Heart left ventricle (tissue), 16 donors: ENCODE measurements at regions of chr9 and their contacts with region 1.

Region 1: GRCh38 chr9:19108038-19108437 is 5.3 kb upstream of the HAUS6 start:
- DNase-seq: no peak
- ATAC-seq: no peak
- H3K4me3 ChIP-seq: no peak overlapping the region
- H3K27ac ChIP-seq: no peak overlapping the region
- H3K4me1 ChIP-seq: peaks cover 0 to 4% (median 0%) of the 10 kb centered on the region in 12 donors
- H3K27me3 ChIP-seq: no peaks in the 10 kb centered on the region
- CTCF ChIP-seq: no peak
- POLR2A ChIP-seq: no peak

Region 2: GRCh38 chr9:18721267-18721994 is 386.6 kb before region 1 on chr9:
- intact Hi-C with region 1: no loop called
- DNase-seq: no peak
- ATAC-seq: peak in 2 of 4 donors; percentile 81 to 82
- H3K4me3 ChIP-seq: no peak overlapping the region
- H3K27ac ChIP-seq: no peak overlapping the region
- H3K4me1 ChIP-seq: peaks cover 0 to 8% (median 0%) of the 10 kb centered on the region in 12 donors
- H3K27me3 ChIP-seq: no peaks in the 10 kb centered on the region
- CTCF ChIP-seq: no peak
- POLR2A ChIP-seq: no peak

Region 3: DNA sequence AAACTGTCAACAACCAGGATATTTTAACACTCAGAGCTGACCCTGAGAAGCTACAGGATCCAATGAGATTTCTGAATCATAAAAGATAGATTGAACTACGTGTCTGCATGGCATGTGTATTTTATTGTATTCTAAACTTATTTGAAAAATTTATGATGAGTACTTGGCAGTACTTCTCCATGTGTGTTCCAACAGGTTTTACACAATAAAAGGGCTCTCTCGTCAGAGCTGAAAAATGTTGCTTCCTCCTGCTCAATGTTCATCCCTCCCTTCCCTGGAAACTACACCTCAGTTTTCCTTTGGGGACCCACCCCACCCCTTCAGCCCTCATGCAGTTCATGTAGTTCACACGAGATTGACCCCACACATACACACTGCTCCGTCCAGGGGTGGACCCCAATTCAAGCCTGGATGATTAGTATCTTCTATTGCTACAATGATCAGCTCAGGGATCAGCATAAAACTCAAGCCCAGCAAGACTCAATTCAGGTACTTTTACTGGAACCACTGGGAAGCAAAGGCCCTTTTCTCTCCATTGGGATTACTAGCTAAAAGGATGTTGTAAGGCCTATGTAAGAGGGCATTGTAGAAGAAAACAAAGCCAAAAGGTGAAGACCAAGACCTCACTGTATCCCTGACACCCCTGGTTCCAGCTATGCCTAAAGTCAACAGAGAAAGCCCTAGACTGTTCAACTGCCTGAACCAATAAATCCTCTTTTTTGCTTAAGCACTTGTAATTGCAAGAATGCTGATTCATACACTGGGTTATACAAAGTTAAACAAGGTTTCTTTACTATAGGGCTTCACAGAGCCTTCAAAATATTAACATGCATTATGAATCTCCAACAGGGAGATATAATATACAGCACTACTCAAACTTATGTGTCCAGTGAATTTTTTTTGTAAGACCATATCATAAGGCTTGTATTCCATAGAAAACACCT is 187.6 kb before region 1 on chr9:
- intact Hi-C with region 1: no loop called
- DNase-seq: no peak
- ATAC-seq: no peak
- H3K4me3 ChIP-seq: no peak overlapping the region
- H3K27ac ChIP-seq: no peak overlapping the region
- H3K4me1 ChIP-seq: peaks cover 0 to 23% (median 4%) of the 10 kb centered on the region in 12 donors
- H3K27me3 ChIP-seq: no peaks in the 10 kb centered on the region
- CTCF ChIP-seq: no peak
- POLR2A ChIP-seq: no peak

Region 4: DNA sequence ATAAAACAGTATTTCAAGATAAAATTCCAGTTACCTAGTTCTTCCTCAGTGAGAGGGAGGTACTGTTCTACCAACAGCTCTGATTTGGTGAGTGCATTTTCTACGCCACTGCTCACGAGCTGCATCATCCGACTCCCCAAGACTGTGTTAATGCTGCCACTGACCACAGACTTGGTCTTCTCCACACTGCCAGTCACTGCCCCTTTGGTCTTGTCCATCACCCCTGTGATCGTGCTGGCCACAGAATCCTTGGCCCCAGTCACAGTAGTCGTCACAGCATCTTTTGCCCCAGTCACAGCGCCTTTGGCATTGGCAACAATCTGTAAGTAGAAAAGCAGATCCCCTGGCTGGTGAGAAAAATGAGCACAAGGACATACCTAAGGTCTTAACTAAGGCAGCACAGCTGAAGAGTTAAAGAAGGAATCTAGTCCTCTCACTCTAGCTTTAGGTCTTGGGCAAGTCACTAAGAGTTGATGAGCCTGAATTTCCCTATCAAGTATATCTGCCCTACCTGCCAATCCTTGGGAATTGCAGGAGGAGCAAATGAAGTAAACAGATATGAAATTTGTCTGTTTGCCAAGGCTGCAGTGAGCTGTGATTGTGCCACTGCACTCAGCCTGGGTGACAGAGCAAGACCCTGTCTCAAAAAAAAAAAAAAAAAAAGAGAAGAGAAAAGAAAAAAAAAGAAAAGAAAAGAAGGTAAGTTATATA is 13.0 kb after region 1 on chr9:
- intact Hi-C with region 1: loop called in 2 of 10 experiments (anchors 1 to 2 kb)
- DNase-seq: no peak
- ATAC-seq: no peak
- H3K4me3 ChIP-seq: no peak overlapping the region
- H3K27ac ChIP-seq: peak overlapping the region in 1 of 12 donors; percentile 17
- H3K4me1 ChIP-seq: peaks cover 0 to 77% (median 20%) of the 10 kb centered on the region in 12 donors
- H3K27me3 ChIP-seq: no peaks in the 10 kb centered on the region
- CTCF ChIP-seq: no peak
- POLR2A ChIP-seq: no peak

Region 5: GRCh38 chr9:19271076-19271475 is 163.0 kb after region 1 on chr9:
- intact Hi-C with region 1: no loop called
- DNase-seq: no peak
- ATAC-seq: no peak
- H3K4me3 ChIP-seq: no peak overlapping the region
- H3K27ac ChIP-seq: no peak overlapping the region
- H3K4me1 ChIP-seq: peaks cover 0 to 19% (median 2%) of the 10 kb centered on the region in 12 donors
- H3K27me3 ChIP-seq: no peaks in the 10 kb centered on the region
- CTCF ChIP-seq: no peak
- POLR2A ChIP-seq: no peak

Region 6: DNA sequence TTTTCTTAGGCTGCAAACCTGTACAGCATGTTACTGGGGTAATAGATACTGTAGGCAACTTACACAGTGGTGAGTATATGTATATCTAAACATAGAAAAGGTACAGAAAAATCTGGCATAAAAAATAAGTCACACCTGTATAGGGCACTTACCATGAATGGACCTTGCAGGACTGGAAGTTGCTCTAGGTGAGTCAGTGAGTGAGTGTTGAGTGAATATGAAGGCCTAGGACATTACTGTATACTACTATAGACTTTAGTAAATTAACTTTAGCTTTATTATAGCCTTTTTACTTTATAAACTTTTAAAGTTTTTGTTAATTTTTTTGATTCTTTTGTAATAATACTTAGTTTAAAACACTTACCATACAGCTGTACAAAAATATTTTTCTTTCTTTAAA is 173.8 kb after region 1 on chr9:
- intact Hi-C with region 1: no loop called
- DNase-seq: no peak
- ATAC-seq: no peak
- H3K4me3 ChIP-seq: no peak overlapping the region
- H3K27ac ChIP-seq: no peak overlapping the region
- H3K4me1 ChIP-seq: peaks cover 0 to 26% (median 12%) of the 10 kb centered on the region in 12 donors
- H3K27me3 ChIP-seq: no peaks in the 10 kb centered on the region
- CTCF ChIP-seq: no peak
- POLR2A ChIP-seq: no peak